ENCODE measurements at regions of chr5 and their contacts with region 1.

Region 1: GRCh38 chr5:14326035-14326903 is 183.1 kb downstream of the TRIO start:
- DNase-seq: no peak
- H3K4me3 ChIP-seq: no peak overlapping the region
- H3K27me3 ChIP-seq: no peaks in the 10 kb centered on the region
- CTCF ChIP-seq: peak; percentile 24; the same call in 1 of the 2 replicates

Region 2: DNA sequence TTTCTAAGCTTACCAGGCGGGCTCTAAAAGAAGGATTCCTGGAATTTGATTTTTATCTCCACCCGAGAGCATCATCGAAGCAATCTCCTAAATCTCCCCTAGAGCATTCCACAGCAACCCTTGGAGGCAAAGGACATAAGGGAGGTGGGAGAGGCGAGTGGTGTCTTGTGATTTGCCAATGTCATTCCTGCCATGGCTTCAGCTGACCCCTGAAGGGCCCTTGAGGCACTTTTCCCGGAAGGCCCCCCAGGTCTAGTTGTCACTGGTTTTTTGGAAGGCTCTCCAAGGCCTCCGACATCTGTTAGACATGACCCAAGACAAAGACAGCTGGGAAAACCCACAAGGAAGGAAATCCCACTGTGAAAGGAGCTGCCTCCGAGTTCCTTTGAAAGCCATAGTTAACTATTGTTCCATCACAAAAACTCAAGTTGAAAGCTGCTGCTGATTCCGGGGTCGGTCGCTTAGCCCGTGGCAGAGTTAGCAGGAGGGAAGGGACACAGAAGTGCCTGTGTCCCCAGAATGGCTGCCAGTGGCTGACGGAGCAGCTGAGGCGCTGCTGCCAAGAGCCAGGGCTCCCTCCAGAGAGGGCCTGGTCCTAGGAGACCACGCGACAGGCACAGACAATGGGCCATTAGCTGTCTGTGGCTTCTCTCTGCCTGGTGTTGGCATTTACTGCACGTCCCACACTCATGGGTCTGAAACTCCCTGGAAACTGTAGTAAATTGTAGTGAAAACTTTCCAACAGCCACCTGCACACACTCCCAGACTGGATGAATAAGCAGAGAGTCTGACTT is 207.5 kb before region 1 on chr5:
- CTCF ChIA-PET with region 1: no interaction called
- POLR2A ChIA-PET with region 1: no interaction called
- DNase-seq: no peak
- H3K4me3 ChIP-seq: no peak overlapping the region
- H3K27me3 ChIP-seq: no peaks in the 10 kb centered on the region
- CTCF ChIP-seq: no peak

Region 3: GRCh38 chr5:14501353-14502293 is 175.4 kb after region 1 on chr5:
- CTCF ChIA-PET with region 1: no interaction called
- POLR2A ChIA-PET with region 1: interaction called, 22 read pairs
- DNase-seq: no peak
- H3K4me3 ChIP-seq: no peak overlapping the region
- H3K27me3 ChIP-seq: no peaks in the 10 kb centered on the region
- CTCF ChIP-seq: no peak

Measured in BJ (cell line).